ENCODE measurements at regions of chr2 and their contacts with region 1.

Region 1: GRCh38 chr2:71510196-71510807 is 56.9 kb downstream of the DYSF start:
- H3K4me3 ChIP-seq: no peak overlapping the region
- H3K27ac ChIP-seq: no peak overlapping the region
- H3K4me1 ChIP-seq: no peaks in the 10 kb centered on the region
- CTCF ChIP-seq: peak; percentile 81

Region 2: DNA sequence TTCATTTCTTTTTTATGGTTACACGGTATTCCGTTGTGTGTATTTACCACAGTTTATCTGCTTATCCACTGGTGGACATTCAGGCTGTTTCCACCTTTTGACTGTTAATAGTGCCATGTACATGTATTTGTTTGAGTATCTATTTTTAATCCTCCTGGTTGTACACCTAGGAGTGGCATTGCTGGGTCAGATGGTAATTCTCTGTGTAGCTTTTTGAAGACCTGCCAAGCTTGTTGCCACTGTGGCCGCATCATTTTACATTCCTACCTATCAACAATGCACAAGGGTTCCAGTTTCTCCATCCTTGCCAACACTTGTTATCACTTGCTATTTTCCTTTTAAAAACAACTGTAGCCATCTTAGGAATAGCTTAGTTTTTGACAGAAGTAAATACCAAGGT is 366.5 kb before region 1 on chr2:
- CTCF ChIA-PET with region 1: no interaction called
- POLR2A ChIA-PET with region 1: no interaction called
- H3K4me3 ChIP-seq: no peak overlapping the region
- H3K27ac ChIP-seq: no peak overlapping the region
- H3K4me1 ChIP-seq: no peaks in the 10 kb centered on the region
- CTCF ChIP-seq: no peak

Region 3: GRCh38 chr2:71226965-71227560 is 283.2 kb before region 1 on chr2 and contains the start of gene PAIP2B:
- CTCF ChIA-PET with region 1: interaction called, 24 read pairs
- POLR2A ChIA-PET with region 1: interaction called, 6 read pairs
- H3K4me3 ChIP-seq: peak within 1 kb of the TSS; percentile 61
- H3K27ac ChIP-seq: peak within 1 kb of the TSS; percentile 64
- H3K4me1 ChIP-seq: peaks cover 5% of the 10 kb centered on the region; the same call in 1 of the 2 replicates
- CTCF ChIP-seq: no peak; the same call in 1 of the 2 replicates

Region 4: GRCh38 chr2:71331581-71332434 is 178.5 kb before region 1 on chr2 and contains the start of gene ZNF638:
- CTCF ChIA-PET with region 1: interaction called, 10 read pairs
- POLR2A ChIA-PET with region 1: interaction called, 5 read pairs
- H3K4me3 ChIP-seq: peak within 1 kb of the TSS; percentile 89
- H3K27ac ChIP-seq: peak within 1 kb of the TSS; percentile 76
- H3K4me1 ChIP-seq: peaks cover 16% of the 10 kb centered on the region
- CTCF ChIP-seq: peak; percentile 90

Region 5: DNA sequence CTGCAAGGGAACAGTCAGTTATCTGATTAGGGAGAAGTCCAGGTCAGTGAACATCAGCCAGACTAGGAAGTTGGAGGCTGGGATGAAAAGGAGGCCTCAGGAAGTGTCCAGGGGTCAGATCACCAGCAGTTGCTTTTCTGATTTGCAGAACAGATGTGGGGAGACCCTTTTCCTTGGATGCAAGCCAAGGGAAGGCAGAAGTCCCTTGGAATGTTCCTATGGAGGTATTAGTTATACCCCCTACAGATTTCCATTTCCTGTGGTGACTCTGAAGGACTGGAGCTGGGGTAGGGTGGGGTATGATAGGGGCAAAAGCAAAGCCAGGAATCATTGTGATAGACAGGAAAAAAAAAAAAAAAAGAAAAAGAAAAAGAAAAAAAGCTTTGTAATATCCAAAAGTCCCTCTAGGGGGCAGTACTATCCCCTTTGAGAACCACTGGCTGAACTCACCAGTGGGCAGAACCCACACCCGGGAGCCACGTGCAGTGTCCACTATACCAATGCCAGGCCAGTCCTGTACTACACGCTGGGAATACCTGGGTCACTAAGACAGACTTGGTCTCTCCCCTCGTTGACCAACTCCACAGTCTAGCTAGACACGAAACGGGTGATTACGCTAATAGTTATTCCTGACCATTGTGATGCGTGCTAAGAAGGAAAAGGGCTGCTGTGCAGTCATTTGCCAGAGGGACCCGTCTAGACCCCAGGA is 49.6 kb before region 1 on chr2:
- CTCF ChIA-PET with region 1: interaction called, 32 read pairs
- POLR2A ChIA-PET with region 1: no interaction called
- H3K4me3 ChIP-seq: no peak overlapping the region
- H3K27ac ChIP-seq: no peak overlapping the region
- H3K4me1 ChIP-seq: no peaks in the 10 kb centered on the region
- CTCF ChIP-seq: 0 out of 2 replicates have a peak, but pooled peaks have one; percentile 11

Region 6: DNA sequence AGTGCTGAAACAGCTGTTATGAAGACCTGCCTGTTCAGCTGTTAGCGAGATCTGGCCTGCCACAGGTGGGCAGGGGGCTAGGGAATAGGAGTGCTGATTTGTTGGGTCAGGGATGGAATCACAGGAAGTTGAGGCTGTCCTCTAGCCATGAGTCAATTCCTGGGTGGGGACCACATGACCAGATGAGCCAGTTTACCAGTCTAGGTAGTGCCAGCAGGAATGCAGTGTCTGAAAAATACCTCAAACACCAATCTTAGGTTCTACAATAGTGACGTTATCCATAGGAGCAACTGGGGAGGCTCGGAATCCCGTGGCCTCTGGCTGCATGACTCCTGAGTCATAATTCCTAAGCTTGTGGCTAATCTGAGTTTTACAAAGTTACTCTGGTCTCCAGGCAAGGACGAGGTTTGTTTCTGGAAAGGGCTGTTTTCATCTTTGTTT is 12.0 kb before region 1 on chr2:
- CTCF ChIA-PET with region 1: interaction called, 14 read pairs
- POLR2A ChIA-PET with region 1: no interaction called
- H3K4me3 ChIP-seq: no peak overlapping the region
- H3K27ac ChIP-seq: no peak overlapping the region
- H3K4me1 ChIP-seq: no peaks in the 10 kb centered on the region
- CTCF ChIP-seq: no peak

Region 7: GRCh38 chr2:71933467-71934319 is 423.4 kb after region 1 on chr2:
- CTCF ChIA-PET with region 1: no interaction called
- POLR2A ChIA-PET with region 1: no interaction called
- H3K4me3 ChIP-seq: no peak overlapping the region
- H3K27ac ChIP-seq: no peak overlapping the region
- H3K4me1 ChIP-seq: peaks cover 6% of the 10 kb centered on the region; the same call in 1 of the 2 replicates
- CTCF ChIP-seq: peak; percentile 55

Measured in HEK293 (cell line).